ENCODE measurements at regions of chr16 and their contacts with region 1.

Region 1: DNA sequence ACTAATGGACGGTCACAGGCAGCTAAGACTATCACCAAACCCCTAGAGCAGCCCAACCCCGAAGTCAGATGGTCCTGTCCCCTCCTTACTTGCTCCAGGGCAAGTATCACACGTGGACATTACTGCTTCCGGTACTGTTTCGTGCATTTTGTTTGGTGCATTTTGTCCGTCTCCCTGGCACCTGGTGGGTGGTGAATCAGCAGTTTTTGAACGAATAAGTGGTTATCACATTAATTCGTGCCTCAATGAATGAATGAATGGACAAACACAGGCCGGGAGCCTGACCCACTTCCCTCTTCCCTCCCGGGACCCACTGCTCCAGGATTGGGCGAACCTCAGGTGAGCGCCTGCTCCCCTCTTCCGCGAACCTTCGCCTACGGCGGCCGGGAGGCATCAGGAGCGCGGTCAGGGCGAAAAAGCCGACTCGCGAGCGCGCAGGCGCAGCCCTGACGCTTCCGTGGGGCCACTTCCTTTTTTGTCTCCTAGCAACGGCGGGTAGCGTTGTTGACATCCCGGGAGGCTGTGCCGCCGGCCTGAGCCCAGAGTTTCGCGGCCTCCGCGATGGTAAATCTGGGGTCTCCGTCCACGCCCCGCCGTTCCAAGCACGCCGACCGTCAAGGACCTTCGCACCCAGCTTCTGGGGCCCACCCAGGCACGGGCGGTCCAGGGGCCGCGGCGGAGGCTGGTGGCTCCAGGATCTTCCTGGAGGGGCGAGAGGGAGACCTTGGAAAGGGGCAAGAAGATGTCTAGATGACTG is at the start of gene DYNLRB2:
- DNase-seq: peak; percentile 92 to 96 (median 94)
- H3K4me3 ChIP-seq: peak within 1 kb of the TSS in 3 of 4 donors; percentile 42 to 72 (median 44)
- H3K27ac ChIP-seq: peak within 1 kb of the TSS in 3 of 5 donors; percentile 30 to 76 (median 48)
- H3K4me1 ChIP-seq: peaks cover 0 to 6% of the 10 kb centered on the region in 2 donors
- H3K27me3 ChIP-seq: peaks cover 7% of the 10 kb centered on the region
- CTCF ChIP-seq: no peak
- POLR2A ChIP-seq: no peak
- total RNA-seq, gene DYNLRB2: 1.5 to 4.1 (median 2.5) TPM in 8 of 9 donors, not detected in the other

Region 2: GRCh38 chr16:80824718-80825364 is 284.1 kb after region 1 on chr16:
- intact Hi-C with region 1: loop called in 1 of 2 experiments (anchors 10 kb)
- DNase-seq: peak in 5 of 7 donors; percentile 17 to 69 (median 59)
- H3K4me3 ChIP-seq: no peak overlapping the region
- H3K27ac ChIP-seq: no peak overlapping the region
- H3K4me1 ChIP-seq: no peaks in the 10 kb centered on the region
- H3K27me3 ChIP-seq: no peaks in the 10 kb centered on the region
- CTCF ChIP-seq: peak; percentile 61 to 82 (median 68)
- POLR2A ChIP-seq: no peak

Measured in adrenal gland (tissue), 19 donors.